GM10248 (cell line): ENCODE measurements at regions of chr4 and their contacts with region 1.

Region 1: DNA sequence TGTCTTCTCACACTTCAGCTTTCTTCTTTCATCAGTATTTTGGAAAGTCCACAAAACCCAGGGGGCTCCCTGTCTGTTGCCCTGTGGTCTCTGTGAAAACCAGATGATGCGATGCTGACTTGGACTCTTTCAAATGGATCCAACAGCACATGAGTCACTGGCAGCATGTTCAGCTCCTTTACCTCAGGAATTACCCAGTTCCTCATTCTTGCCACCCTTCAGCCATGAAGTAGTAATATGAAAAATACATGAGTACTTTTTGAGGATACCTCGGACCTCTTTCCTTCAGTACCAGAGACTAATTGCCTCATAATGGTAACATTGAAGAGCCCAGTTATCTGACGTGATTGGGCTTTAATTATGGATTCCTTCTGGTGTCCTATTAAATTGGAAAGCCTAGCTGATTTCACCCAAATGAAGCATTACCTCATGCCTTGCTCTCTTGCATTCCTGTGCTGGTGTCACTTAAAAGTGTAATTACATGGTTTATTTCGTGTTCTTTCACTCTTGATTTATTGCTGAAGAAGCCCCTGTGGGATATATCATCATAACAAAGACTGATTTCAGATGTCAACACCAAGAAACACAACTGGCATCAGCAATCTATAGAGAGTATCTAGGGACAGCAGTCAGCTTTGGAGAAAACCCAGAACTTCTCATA is 63.4 kb downstream of the NFKB1 start:
- DNase-seq: peak; percentile 32
- CTCF ChIP-seq: no peak

Region 2: DNA sequence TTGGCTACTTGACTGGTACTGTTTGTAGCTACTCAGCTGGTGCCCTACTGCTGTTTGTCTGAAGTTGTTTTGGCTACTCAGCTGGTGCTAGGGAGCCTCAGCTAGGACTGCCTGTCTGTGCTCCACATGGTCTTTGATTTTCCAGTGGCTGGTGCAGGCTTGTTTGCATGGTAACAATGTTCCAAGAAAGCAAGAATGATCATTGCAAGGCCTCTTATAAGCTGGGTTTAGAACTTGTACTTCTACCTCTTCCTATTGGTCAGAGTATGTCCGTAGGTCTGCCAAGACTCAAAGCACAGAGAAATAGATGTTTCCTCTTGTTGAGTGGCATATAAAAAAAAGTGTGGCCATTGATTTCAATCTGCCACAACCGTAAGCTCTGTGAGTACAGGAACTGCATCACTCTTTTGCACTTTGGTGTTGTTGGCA is 45.8 kb before region 1 on chr4:
- CTCF ChIA-PET with region 1: no interaction called
- POLR2A ChIA-PET with region 1: no interaction called
- DNase-seq: no peak
- CTCF ChIP-seq: no peak

Region 3: GRCh38 chr4:102543030-102543928 is 21.2 kb before region 1 on chr4:
- CTCF ChIA-PET with region 1: interaction called, 13 read pairs
- POLR2A ChIA-PET with region 1: no interaction called
- DNase-seq: peak; percentile 22
- CTCF ChIP-seq: no peak

Region 4: DNA sequence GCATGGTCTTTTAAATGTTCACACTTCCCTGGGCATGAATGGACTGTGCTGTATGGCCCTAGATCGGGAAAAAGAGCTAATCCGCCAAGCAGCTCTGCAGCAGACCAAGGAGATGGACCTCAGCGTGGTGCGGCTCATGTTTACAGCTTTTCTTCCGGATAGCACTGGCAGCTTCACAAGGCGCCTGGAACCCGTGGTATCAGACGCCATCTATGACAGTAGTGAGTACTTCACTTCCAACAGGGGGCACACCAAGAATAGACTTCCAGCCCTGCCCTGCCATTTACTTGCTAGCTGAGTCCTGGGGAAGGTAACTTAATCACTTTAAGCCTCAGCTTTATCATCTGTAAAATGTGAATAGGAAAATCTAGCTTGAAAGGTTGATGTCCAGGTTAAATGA is 14.3 kb after region 1 on chr4:
- CTCF ChIA-PET with region 1: interaction called, 19 read pairs
- POLR2A ChIA-PET with region 1: no interaction called
- DNase-seq: no peak
- CTCF ChIP-seq: no peak

Region 5: GRCh38 chr4:104465201-104465600 is 1900.7 kb after region 1 on chr4:
- CTCF ChIA-PET with region 1: no interaction called
- POLR2A ChIA-PET with region 1: no interaction called
- DNase-seq: no peak
- CTCF ChIP-seq: no peak